Heart right ventricle (tissue), 16 donors: ENCODE measurements at regions of chr1 and their contacts with region 1.

Region 1: DNA sequence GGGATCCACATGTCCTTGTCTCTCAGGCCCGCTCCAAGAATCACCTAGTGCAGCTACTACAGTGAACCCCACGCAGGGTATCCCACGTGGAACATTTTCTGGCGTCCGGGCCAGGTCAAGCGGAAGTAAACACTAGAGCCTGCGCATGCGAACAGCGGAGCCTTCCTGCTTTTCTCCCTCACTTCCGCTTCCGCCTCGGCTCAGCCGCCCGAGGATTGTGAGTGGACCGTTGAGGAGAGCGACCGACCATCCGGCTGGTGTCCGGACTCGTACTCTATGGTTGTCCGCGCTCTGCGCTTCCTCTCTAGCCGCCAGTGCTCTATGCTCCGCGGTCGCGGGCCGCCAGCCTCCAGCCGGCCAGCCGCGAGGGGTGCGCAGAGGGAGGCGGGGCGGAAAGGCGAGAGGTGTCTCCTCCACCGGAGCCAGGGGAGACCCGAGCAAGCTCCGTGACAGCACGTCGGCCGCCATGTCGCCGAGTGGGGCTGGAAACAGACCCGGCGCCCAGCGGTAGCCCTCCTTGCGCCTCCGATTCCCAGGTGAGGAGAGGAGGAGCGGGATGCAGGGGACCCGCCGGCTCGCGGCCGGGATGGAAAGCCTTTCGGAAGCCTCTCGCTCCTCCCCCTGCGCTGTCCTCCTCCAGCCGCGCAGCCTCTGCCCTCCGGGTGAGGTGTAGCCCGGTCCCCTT is at the starts of genes CNST and TFB2M:
- DNase-seq: peak; percentile 96 to 98
- ATAC-seq: peak; percentile 98 to 100 (median 98)
- H3K4me3 ChIP-seq: peak within 1 kb of the TSS; percentile 75 to 98 (median 89)
- H3K27ac ChIP-seq: peak within 1 kb of the TSS; percentile 86 to 97 (median 93)
- H3K4me1 ChIP-seq: peaks cover 0 to 61% (median 57%) of the 10 kb centered on the region in 9 donors
- H3K27me3 ChIP-seq: no peaks in the 10 kb centered on the region
- CTCF ChIP-seq: no peak
- total RNA-seq, gene CNST: 13.1 to 24.4 (median 15.4) TPM
- total RNA-seq, gene TFB2M: 10.1 to 16.5 (median 13.6) TPM

Region 2: GRCh38 chr1:246608616-246609376 is 42.5 kb after region 1 on chr1:
- intact Hi-C with region 1: loop called in 5 of 10 experiments (anchors 2 to 5 kb)
- DNase-seq: peak; percentile 54 to 76
- ATAC-seq: peak; percentile 87 to 98 (median 94)
- H3K4me3 ChIP-seq: no peak overlapping the region
- H3K27ac ChIP-seq: peak overlapping the region in 9 of 10 donors; percentile 49 to 77 (median 71)
- H3K4me1 ChIP-seq: peaks cover 0 to 57% (median 29%) of the 10 kb centered on the region in 9 donors
- H3K27me3 ChIP-seq: no peaks in the 10 kb centered on the region
- CTCF ChIP-seq: peak in 7 of 9 donors; percentile 8 to 57 (median 47)

Region 3: DNA sequence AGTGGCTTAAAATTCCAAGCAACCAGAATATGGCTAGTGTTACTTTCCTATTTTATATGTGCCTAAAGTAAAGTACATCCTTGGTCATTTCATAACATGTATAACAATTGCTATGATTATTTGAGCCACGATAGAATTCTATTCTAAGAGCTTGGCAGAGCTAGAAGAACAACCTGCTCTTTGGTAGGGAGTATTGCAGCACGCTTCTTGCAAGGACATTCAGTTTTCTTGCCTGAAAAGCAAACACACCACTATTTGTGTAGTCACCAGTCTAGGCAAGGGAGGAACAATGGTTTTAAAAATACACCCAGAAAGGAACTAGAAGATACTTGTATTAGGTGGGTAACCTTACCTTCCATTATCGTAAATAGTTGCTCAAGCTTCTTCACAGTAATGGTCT is 51.5 kb after region 1 on chr1:
- intact Hi-C with region 1: loop called in 2 of 10 experiments (anchors 5 kb)
- DNase-seq: no peak
- ATAC-seq: peak in 6 of 8 donors; percentile 42 to 93 (median 60)
- H3K4me3 ChIP-seq: no peak overlapping the region
- H3K27ac ChIP-seq: peak overlapping the region in 7 of 10 donors; percentile 15 to 67 (median 33)
- H3K4me1 ChIP-seq: peaks cover 0 to 36% (median 14%) of the 10 kb centered on the region in 9 donors
- H3K27me3 ChIP-seq: no peaks in the 10 kb centered on the region
- CTCF ChIP-seq: no peak

Region 4: DNA sequence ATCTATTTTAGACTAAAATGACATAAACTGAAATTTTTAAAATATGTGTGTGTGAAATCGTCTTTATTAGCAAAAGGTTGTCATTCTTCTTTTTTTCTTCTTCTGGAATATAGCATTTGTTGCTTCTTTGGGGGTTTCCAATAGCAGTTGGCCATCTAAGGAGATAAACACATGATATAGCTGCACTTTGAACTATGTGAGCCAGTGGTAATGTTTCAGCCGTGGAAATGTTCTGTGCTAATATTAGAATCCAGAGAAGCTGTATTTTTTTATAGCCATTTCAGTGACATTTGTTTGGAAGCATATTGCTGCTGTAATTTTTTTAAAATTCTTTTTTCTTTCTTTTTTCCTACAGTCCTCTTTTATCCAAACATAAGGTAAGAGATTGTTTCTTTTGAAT is 75.1 kb after region 1 on chr1:
- intact Hi-C with region 1: loop called in 5 of 10 experiments (anchors 5 to 10 kb)
- DNase-seq: no peak
- ATAC-seq: peak in 2 of 8 donors; percentile 50 to 68
- H3K4me3 ChIP-seq: no peak overlapping the region
- H3K27ac ChIP-seq: peak overlapping the region in 5 of 10 donors; percentile 4 to 49 (median 18)
- H3K4me1 ChIP-seq: peaks cover 0 to 26% (median 11%) of the 10 kb centered on the region in 9 donors
- H3K27me3 ChIP-seq: no peaks in the 10 kb centered on the region
- CTCF ChIP-seq: no peak

Region 5: GRCh38 chr1:246647113-246647512 is 80.8 kb after region 1 on chr1:
- intact Hi-C with region 1: loop called in 5 of 10 experiments (anchors 5 to 10 kb)
- DNase-seq: peak; percentile 69 to 76
- ATAC-seq: peak; percentile 91 to 97 (median 95)
- H3K4me3 ChIP-seq: peak overlapping the region in 9 of 10 donors; percentile 9 to 53 (median 37)
- H3K27ac ChIP-seq: peak overlapping the region in 8 of 10 donors; percentile 21 to 76 (median 60)
- H3K4me1 ChIP-seq: peaks cover 0 to 32% (median 12%) of the 10 kb centered on the region in 9 donors
- H3K27me3 ChIP-seq: no peaks in the 10 kb centered on the region
- CTCF ChIP-seq: peak; percentile 35 to 79 (median 66)

Region 6: GRCh38 chr1:246689409-246690008 is 123.2 kb after region 1 on chr1:
- intact Hi-C with region 1: loop called in 1 of 10 experiments (anchors 2 kb)
- DNase-seq: peak; percentile 54 to 64
- ATAC-seq: peak; percentile 81 to 89 (median 85)
- H3K4me3 ChIP-seq: peak overlapping the region in 9 of 10 donors; percentile 14 to 52 (median 46)
- H3K27ac ChIP-seq: peak overlapping the region in 7 of 10 donors; percentile 19 to 73 (median 30)
- H3K4me1 ChIP-seq: peaks cover 0 to 26% (median 9%) of the 10 kb centered on the region in 9 donors
- H3K27me3 ChIP-seq: no peaks in the 10 kb centered on the region
- CTCF ChIP-seq: peak; percentile 59 to 84 (median 81)

Region 7: GRCh38 chr1:246699095-246699735 is 132.9 kb after region 1 on chr1:
- intact Hi-C with region 1: loop called in 5 of 10 experiments (anchors 2 to 5 kb)
- DNase-seq: peak; percentile 81 to 92
- ATAC-seq: peak; percentile 88 to 97 (median 92)
- H3K4me3 ChIP-seq: peak overlapping the region in 8 of 10 donors; percentile 4 to 45 (median 34)
- H3K27ac ChIP-seq: peak overlapping the region in 9 of 10 donors; percentile 18 to 87 (median 49)
- H3K4me1 ChIP-seq: peaks cover 3 to 26% (median 10%) of the 10 kb centered on the region in 9 donors
- H3K27me3 ChIP-seq: no peaks in the 10 kb centered on the region
- CTCF ChIP-seq: peak; percentile 74 to 96 (median 91)